ENCODE measurements at regions of chr3 and their contacts with region 1.

Region 1: DNA sequence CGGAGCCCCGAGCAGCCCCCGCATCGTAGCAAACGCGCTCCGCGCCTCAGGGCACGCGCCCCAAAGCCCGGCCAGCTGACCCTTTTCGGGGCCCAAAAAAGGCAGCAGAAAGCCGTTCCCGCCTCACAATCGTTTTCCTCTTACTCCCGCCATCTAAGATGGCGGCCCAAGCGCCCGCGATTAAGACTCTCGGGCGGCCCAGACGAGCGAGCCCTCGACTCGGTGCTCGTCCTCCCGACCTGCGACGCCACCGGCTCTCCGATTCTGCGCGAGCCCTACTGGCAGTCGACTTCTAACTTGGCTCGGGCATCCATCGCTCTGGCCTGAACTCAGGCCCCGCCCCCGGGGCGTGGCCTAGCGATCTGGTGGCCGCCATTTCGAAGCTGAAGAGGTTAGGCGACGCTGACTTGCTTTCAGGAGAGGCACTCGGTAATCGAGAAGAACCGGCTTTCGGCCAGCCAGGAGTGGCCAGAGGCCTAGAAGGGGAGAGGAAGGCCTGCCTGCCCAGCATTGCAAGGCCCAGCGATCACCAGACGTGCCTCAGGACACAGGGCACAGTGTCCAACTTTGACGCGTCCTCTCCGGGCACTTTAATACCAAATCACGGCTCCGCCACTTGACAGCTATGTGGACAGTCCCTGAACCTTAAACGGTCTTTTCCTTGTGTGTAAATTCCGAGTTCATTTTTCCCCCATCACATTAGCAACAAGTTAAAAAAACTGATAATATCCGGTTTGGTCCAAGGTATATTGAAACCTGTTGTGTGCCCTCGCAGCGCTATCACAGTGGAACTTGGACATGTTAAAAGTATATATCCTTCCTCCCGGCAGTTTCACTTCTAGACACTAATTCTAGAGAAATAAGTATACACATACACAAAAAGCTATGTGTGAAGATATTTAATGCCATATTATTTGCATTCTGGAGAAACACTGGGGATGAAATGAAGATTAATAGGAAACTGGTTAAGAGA is at the start of gene RAF1:
- DNase-seq: peak; percentile 97 to 98
- H3K4me3 ChIP-seq: peak within 1 kb of the TSS; percentile 90 to 98 (median 97)
- H3K27ac ChIP-seq: peak within 1 kb of the TSS; percentile 98
- H3K4me1 ChIP-seq: peaks cover 0 to 6% (median 0%) of the 10 kb centered on the region in 4 experiments; a peak in 4 of 7 replicates
- H3K27me3 ChIP-seq: no peaks in the 10 kb centered on the region
- CTCF ChIP-seq: peak in 1 of 3 experiments; percentile 14; a peak in 1 of 4 replicates
- EP300 ChIP-seq: peak in 1 of 2 experiments; percentile 58; a peak in 1 of 3 replicates
- POLR2A ChIP-seq: peak; percentile 66 to 73
- RAD21 ChIP-seq: no peak
- total RNA-seq, gene RAF1: 96.7 and 103 TPM in 2 replicates

Region 2: GRCh38 chr3:12578742-12579141 is 85.5 kb before region 1 on chr3:
- CTCF ChIA-PET with region 1: no interaction called
- POLR2A ChIA-PET with region 1: no interaction called
- DNase-seq: no peak
- H3K4me3 ChIP-seq: no peak overlapping the region
- H3K27ac ChIP-seq: no peak overlapping the region
- H3K4me1 ChIP-seq: no peaks in the 10 kb centered on the region
- H3K27me3 ChIP-seq: no peaks in the 10 kb centered on the region
- CTCF ChIP-seq: 0 out of 4 replicates have a peak, but pooled peaks of 1 of the 3 experiments have one; percentile 7
- EP300 ChIP-seq: no peak
- POLR2A ChIP-seq: no peak
- RAD21 ChIP-seq: no peak

Region 3: DNA sequence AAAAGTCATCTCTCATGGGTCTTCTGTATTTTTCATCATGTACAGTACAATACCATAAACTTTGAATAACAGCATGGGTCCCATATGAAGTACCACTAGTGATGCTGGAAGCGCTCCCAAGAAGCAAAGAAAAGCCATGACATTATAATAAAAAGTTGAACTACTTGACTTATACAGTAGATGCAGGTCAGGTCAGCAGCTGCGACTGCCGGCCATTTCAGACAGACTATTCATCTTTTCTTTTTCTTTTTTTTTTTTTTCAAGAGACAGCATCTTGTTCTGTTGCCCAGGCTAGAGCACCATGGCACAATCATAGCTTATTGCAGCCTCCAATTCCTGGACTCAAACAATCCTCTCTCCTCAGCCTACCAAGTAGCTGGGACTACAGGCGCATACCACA is 10.5 kb before region 1 on chr3:
- CTCF ChIA-PET with region 1: interaction called, 4 read pairs
- POLR2A ChIA-PET with region 1: interaction called, 22 read pairs
- DNase-seq: no peak
- H3K4me3 ChIP-seq: no peak overlapping the region
- H3K27ac ChIP-seq: no peak overlapping the region
- H3K4me1 ChIP-seq: no peaks in the 10 kb centered on the region
- H3K27me3 ChIP-seq: no peaks in the 10 kb centered on the region
- CTCF ChIP-seq: no peak
- EP300 ChIP-seq: no peak
- POLR2A ChIP-seq: no peak
- RAD21 ChIP-seq: no peak

Region 4: GRCh38 chr3:12675016-12675810 is 11.0 kb after region 1 on chr3:
- CTCF ChIA-PET with region 1: no interaction called
- POLR2A ChIA-PET with region 1: interaction called, 13 read pairs
- DNase-seq: no peak
- H3K4me3 ChIP-seq: no peak overlapping the region
- H3K27ac ChIP-seq: no peak overlapping the region
- H3K4me1 ChIP-seq: peaks cover 8 to 13% (median 12%) of the 10 kb centered on the region in 4 experiments
- H3K27me3 ChIP-seq: no peaks in the 10 kb centered on the region
- CTCF ChIP-seq: no peak
- EP300 ChIP-seq: no peak
- POLR2A ChIP-seq: no peak
- RAD21 ChIP-seq: no peak

Region 5: GRCh38 chr3:12700800-12701199 is 36.6 kb after region 1 on chr3:
- CTCF ChIA-PET with region 1: no interaction called
- POLR2A ChIA-PET with region 1: interaction called, 10 read pairs
- DNase-seq: no peak
- H3K4me3 ChIP-seq: no peak overlapping the region
- H3K27ac ChIP-seq: no peak overlapping the region
- H3K4me1 ChIP-seq: no peaks in the 10 kb centered on the region
- H3K27me3 ChIP-seq: no peaks in the 10 kb centered on the region
- CTCF ChIP-seq: no peak
- EP300 ChIP-seq: no peak
- POLR2A ChIP-seq: no peak
- RAD21 ChIP-seq: no peak